Naive thymus-derived CD4-positive, alpha-beta T cell (primary cell): ENCODE measurements at regions of chr2 and their contacts with region 1.

Region 1: GRCh38 chr2:105545730-105546627 is 147.1 kb upstream of the FHL2 start:
- DNase-seq: peak; percentile 32 to 65 (median 58)
- ATAC-seq: peak; percentile 73
- H3K4me3 ChIP-seq: peak overlapping the region; percentile 31
- H3K4me3 Mint-ChIP-seq: peak overlapping the region in 8 of 10 donors; percentile 31 to 70 (median 63)
- H3K27ac ChIP-seq: peak overlapping the region; percentile 18
- H3K27ac Mint-ChIP-seq: peak overlapping the region in 6 of 9 donors; percentile 0 to 88 (median 36)
- H3K4me1 ChIP-seq: peaks cover 0 to 12% of the 10 kb centered on the region in 2 donors
- H3K4me1 Mint-ChIP-seq: peaks cover 6 to 16% (median 9%) of the 10 kb centered on the region in 7 donors
- H3K27me3 ChIP-seq: no peaks in the 10 kb centered on the region
- H3K27me3 Mint-ChIP-seq: peaks cover 0 to 17% (median 6%) of the 10 kb centered on the region in 5 donors

Region 2: DNA sequence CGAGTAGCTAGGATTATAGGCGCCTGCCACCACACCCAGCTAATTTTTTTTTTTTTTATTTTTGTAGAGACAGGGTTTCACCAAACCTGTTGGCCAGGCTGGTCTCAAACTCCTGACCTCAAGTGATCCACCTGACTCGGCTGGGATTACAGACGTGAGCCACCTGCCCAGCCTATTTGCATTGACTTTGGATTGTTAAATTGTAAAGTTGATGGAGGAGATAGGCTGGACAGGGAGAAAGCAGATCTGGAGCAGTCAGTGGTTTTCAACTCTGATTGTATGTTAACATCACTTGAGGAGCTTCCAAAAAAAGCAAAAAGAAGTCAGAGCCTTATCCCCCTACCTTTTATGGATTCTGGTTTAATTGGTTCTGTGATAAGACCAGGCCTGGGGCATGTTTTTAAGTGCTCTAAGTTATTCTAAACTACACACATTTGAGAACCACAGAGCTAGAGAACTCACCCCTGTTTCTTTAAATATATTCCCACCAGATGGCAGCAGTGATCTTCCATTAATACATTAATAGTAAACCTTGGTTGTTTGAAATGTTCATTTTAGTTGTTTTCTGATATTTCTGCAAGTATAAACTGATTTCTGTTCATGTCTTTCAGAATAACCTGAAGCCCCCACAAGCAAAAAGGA is 201.2 kb before region 1 on chr2:
- CTCF ChIA-PET with region 1: no interaction called
- POLR2A ChIA-PET with region 1: no interaction called
- intact Hi-C with region 1: loop called in 1 of 2 experiments (anchors 1 kb)
- DNase-seq: peak in 5 of 9 donors; percentile 31 to 49 (median 43)
- ATAC-seq: peak; percentile 65
- H3K4me3 ChIP-seq: no peak overlapping the region
- H3K4me3 Mint-ChIP-seq: no peak overlapping the region
- H3K27ac ChIP-seq: no peak overlapping the region
- H3K27ac Mint-ChIP-seq: peak overlapping the region in 1 of 9 donors; percentile 50
- H3K4me1 ChIP-seq: no peaks in the 10 kb centered on the region
- H3K4me1 Mint-ChIP-seq: peaks cover 4 to 20% (median 9%) of the 10 kb centered on the region in 7 donors
- H3K27me3 ChIP-seq: no peaks in the 10 kb centered on the region
- H3K27me3 Mint-ChIP-seq: no peaks in the 10 kb centered on the region

Region 3: GRCh38 chr2:105571445-105571987 is 25.5 kb after region 1 on chr2:
- CTCF ChIA-PET with region 1: no interaction called
- POLR2A ChIA-PET with region 1: interaction called, 3 read pairs
- intact Hi-C with region 1: loop called in 1 of 2 experiments (anchors 1 kb)
- DNase-seq: no peak
- ATAC-seq: no peak
- H3K4me3 ChIP-seq: no peak overlapping the region
- H3K4me3 Mint-ChIP-seq: peak overlapping the region in 1 of 10 donors; percentile 4
- H3K27ac ChIP-seq: no peak overlapping the region
- H3K27ac Mint-ChIP-seq: peak overlapping the region in 2 of 9 donors; percentile 32 to 57
- H3K4me1 ChIP-seq: peaks cover under 1 to 16% of the 10 kb centered on the region in 2 donors
- H3K4me1 Mint-ChIP-seq: peaks cover 10 to 39% (median 13%) of the 10 kb centered on the region in 7 donors
- H3K27me3 ChIP-seq: no peaks in the 10 kb centered on the region
- H3K27me3 Mint-ChIP-seq: peaks cover 0 to 26% (median 0%) of the 10 kb centered on the region in 5 donors